Tibial artery (tissue), 4 donors: ENCODE measurements at regions of chr13 and their contacts with region 1.

Region 1: GRCh38 chr13:101474419-101474957 is 22.0 kb downstream of the ITGBL1 start:
- DNase-seq: peak; percentile 44 to 75
- H3K4me3 ChIP-seq: no peak overlapping the region
- H3K27ac ChIP-seq: peak overlapping the region; percentile 54 to 66
- H3K4me1 ChIP-seq: peaks cover 0 to 23% (median 15%) of the 10 kb centered on the region in 4 donors
- H3K27me3 ChIP-seq: no peaks in the 10 kb centered on the region
- CTCF ChIP-seq: peak; percentile 43

Region 2: GRCh38 chr13:101144808-101145419 is 329.6 kb before region 1 on chr13:
- intact Hi-C with region 1: loop called (anchors 10 kb)
- DNase-seq: no peak
- H3K4me3 ChIP-seq: no peak overlapping the region
- H3K27ac ChIP-seq: no peak overlapping the region
- H3K4me1 ChIP-seq: peaks cover 0 to 4% (median 0%) of the 10 kb centered on the region in 4 donors
- H3K27me3 ChIP-seq: no peaks in the 10 kb centered on the region
- CTCF ChIP-seq: peak; percentile 75 to 82